Heart right ventricle (tissue), 16 donors: ENCODE measurements at regions of chr19 and their contacts with region 1.

Region 1: DNA sequence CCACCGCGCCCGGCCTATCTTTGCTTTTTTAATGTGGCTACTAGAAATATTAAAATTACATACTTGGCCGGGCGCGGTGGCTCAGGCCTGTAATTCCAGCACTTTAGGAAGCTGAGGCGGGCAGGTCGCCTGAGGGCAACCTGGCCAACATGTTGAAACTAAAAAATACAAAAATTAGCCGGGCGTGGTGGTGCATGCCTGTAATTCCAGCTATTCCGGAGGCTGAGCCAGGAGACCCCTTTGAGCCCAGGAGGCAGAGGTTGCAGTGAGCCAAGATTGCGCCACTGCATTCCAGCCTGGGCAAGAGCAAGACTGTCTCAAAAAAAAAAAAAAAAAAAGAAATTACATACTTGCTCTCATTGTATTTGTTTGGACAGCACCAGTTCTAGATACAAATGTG is 34.8 kb upstream of the DPRX start:
- DNase-seq: no peak
- ATAC-seq: no peak
- H3K4me3 ChIP-seq: no peak overlapping the region
- H3K27ac ChIP-seq: peak overlapping the region in 1 of 10 donors; percentile 49
- H3K4me1 ChIP-seq: peaks cover 0 to 11% (median 0%) of the 10 kb centered on the region in 9 donors
- H3K27me3 ChIP-seq: peaks cover 0 to 8% (median 0%) of the 10 kb centered on the region in 7 donors
- CTCF ChIP-seq: no peak

Region 2: DNA sequence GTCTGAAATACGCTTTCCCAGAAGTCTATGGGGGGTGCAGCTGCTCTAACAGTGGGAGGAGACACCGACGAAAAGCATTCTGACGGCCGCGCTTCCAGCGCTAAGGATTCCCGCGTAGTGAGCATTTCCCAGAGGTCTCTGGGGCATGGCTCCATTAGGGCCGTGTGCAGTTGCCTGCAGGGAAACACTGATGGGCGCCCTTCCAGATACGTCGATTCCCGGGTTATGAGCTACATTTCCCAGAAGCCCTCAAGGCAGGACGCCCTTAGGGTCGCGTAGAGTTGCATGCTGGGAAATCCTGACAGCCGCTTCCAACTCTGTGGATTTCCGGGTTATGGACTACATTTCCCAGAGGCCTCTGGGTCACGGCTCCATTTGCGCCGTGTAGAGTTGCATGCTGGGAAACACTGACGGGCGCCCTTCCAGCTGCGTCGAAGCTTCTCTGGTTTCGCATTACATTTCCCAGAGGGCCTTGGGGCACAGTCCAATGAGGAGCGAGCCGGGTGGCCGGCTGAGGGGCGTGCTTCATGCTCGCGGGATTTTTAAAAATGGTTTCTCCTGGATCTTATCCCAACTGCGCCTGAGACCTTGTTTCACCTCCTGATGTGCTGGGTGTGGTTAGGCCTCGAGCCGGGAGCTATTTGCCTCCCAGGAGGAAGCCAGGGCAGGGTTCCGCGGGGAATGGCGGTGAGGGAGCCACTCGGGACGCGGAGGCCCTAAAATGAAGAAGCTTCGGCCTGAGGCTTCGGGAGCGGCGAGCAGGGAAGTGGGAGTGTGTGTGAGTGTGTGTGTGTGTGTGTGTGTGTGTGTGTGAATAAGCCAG is 76.3 kb before region 1 on chr19:
- intact Hi-C with region 1: no loop called
- DNase-seq: peak; percentile 95 to 98
- ATAC-seq: peak; percentile 96 to 100 (median 99)
- H3K4me3 ChIP-seq: peak overlapping the region; percentile 14 to 73 (median 52)
- H3K27ac ChIP-seq: peak overlapping the region; percentile 74 to 88 (median 82)
- H3K4me1 ChIP-seq: peaks cover 0 to 25% (median 14%) of the 10 kb centered on the region in 9 donors
- H3K27me3 ChIP-seq: no peaks in the 10 kb centered on the region
- CTCF ChIP-seq: no peak

Region 3: GRCh38 chr19:53659292-53659691 is 62.3 kb after region 1 on chr19:
- intact Hi-C with region 1: loop called in 1 of 10 experiments (anchors 2 kb)
- DNase-seq: peak in 1 of 2 donors; percentile 41
- ATAC-seq: peak in 6 of 8 donors; percentile 71 to 90 (median 78)
- H3K4me3 ChIP-seq: no peak overlapping the region
- H3K27ac ChIP-seq: peak overlapping the region in 7 of 10 donors; percentile 28 to 82 (median 48)
- H3K4me1 ChIP-seq: peaks cover 0 to 16% (median 0%) of the 10 kb centered on the region in 9 donors
- H3K27me3 ChIP-seq: peaks cover 0 to 12% (median 0%) of the 10 kb centered on the region in 7 donors
- CTCF ChIP-seq: peak in 8 of 9 donors; percentile 9 to 61 (median 47)